ENCODE measurements at regions of chr1 and their contacts with region 1.

Region 1: GRCh38 chr1:153922972-153923925 is at the start of gene GATAD2B:
- DNase-seq: peak; percentile 100
- ATAC-seq: peak; percentile 96
- H3K4me3 ChIP-seq: peak within 1 kb of the TSS; percentile 98
- H3K27ac ChIP-seq: peak within 1 kb of the TSS; percentile 99
- H3K4me1 ChIP-seq: peaks cover 11% of the 10 kb centered on the region
- H3K27me3 ChIP-seq: no peaks in the 10 kb centered on the region
- CTCF ChIP-seq: no peak
- EP300 ChIP-seq: peak in 1 of 2 experiments; percentile 31; a peak in 1 of 4 replicates
- POLR2A ChIP-seq: peak; percentile 79
- RAD21 ChIP-seq: peak; percentile 20; the same call in 1 of the 2 replicates
- polyA plus RNA-seq, gene GATAD2B: 2.4 to 8.7 TPM

Region 2: DNA sequence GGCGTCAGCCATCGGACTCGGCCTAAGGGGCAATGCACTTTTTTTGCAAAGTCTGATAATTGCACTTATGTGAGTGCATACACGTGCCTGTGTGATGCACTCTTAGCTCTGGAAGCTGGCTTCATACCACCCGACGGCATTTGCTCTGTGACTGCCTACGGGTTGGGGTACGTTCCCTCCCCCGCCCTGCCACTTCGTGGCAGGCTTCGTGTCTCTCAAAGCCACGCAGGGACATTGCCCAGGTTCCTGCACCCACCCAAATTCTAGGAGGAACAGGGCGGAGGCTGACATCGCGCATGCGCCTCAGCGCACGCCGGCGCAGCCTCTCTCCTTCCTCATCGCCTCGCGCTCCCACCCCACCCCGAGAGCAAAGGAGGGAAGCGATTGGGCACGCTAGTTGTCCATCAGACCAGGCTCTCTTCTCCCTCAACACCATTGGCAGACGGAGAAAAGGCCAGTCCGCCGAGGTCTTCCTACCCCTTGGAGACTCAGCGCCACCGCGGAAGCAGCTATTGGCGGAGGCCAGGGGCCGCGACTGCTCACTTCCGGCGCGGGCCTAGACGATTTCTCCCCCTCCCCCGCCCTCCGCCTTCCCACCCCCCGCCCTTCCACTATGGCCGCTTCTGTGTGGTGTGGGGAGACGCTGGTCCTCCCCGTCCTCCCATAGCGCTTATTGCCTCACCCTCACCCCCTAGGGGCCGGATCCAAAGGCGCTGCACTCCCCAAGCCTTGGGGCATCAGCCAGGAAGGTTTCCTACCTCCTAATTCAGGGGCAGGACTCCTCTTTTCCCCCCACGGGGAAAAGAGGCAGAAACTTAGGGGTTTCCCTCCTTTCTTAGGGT is 195.6 kb before region 1 on chr1 and contains the start of gene INTS3:
- CTCF ChIA-PET with region 1: no interaction called
- POLR2A ChIA-PET with region 1: no interaction called
- RAD21 ChIA-PET with region 1: interaction called, 4 read pairs
- SMC1A ChIA-PET with region 1: no interaction called
- in situ Hi-C with region 1: no loop called
- intact Hi-C with region 1: loop called (anchors 2 kb)
- DNase-seq: peak; percentile 100
- ATAC-seq: peak; percentile 92
- H3K4me3 ChIP-seq: peak within 1 kb of the TSS; percentile 100
- H3K27ac ChIP-seq: peak within 1 kb of the TSS; percentile 100
- H3K4me1 ChIP-seq: peaks cover 12% of the 10 kb centered on the region
- H3K27me3 ChIP-seq: no peaks in the 10 kb centered on the region
- CTCF ChIP-seq: peak in 2 of 3 experiments; percentile 10 to 19; a peak in 2 of 6 replicates
- EP300 ChIP-seq: no peak
- POLR2A ChIP-seq: peak; percentile 92
- RAD21 ChIP-seq: no peak
- polyA plus RNA-seq, gene INTS3: 12.6 to 14.0 TPM

Region 3: DNA sequence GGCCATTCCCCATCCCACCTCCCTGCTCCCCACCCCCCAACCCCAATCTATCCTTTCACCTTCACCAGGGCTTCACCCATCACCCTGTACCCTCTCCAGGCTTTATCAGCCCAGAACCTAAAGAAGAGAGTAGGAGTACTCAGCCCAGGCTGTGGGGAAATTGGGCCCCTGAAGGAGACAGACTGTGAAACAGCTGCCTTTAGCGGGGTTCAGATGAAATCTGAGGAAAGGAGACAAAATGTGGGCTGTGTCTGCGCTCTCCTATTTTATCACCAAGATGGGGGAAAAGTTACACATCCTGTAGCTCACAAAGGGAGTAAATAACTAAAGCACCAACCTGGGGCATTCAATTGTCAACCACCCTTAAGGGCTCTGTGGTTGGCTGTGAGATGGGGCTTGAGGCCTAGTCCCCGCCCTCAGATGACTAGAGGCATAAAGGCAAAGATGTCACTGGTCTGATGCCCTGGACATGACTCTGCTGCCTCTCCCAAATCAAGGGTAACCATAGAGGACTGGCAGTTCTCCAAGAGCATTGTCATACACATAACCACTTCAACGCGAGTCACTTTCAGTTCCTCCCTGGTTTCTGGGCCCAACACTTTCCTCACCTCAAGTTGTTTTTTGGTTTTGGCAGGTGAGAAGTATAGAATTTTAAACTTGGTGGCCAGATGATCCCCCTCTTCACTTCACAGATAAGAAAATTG is 118.1 kb before region 1 on chr1:
- CTCF ChIA-PET with region 1: interaction called, 9 read pairs
- POLR2A ChIA-PET with region 1: interaction called, 3 read pairs
- RAD21 ChIA-PET with region 1: interaction called, 46 read pairs
- SMC1A ChIA-PET with region 1: interaction called, 6 read pairs
- in situ Hi-C with region 1: no loop called
- intact Hi-C with region 1: loop called (anchors 5 kb)
- DNase-seq: peak; percentile 98
- ATAC-seq: peak; percentile 99
- H3K4me3 ChIP-seq: 0 out of 2 replicates have a peak overlapping the region, but pooled peaks have one; percentile 38
- H3K27ac ChIP-seq: peak overlapping the region; percentile 89
- H3K4me1 ChIP-seq: peaks cover 39% of the 10 kb centered on the region
- H3K27me3 ChIP-seq: no peaks in the 10 kb centered on the region
- CTCF ChIP-seq: no peak
- EP300 ChIP-seq: peak; percentile 90 to 98
- POLR2A ChIP-seq: peak; percentile 38; the same call in 1 of the 2 replicates
- RAD21 ChIP-seq: no peak

Region 4: GRCh38 chr1:153827168-153827964 is 95.9 kb before region 1 on chr1:
- CTCF ChIA-PET with region 1: interaction called, 138 read pairs
- POLR2A ChIA-PET with region 1: interaction called, 5 read pairs
- RAD21 ChIA-PET with region 1: no interaction called
- SMC1A ChIA-PET with region 1: interaction called, 29 read pairs
- in situ Hi-C with region 1: no loop called
- intact Hi-C with region 1: no loop called
- DNase-seq: no peak
- ATAC-seq: peak; percentile 64
- H3K4me3 ChIP-seq: no peak overlapping the region
- H3K27ac ChIP-seq: peak overlapping the region; percentile 52
- H3K4me1 ChIP-seq: peaks cover 10% of the 10 kb centered on the region
- H3K27me3 ChIP-seq: no peaks in the 10 kb centered on the region
- CTCF ChIP-seq: 0 out of 6 replicates have a peak, but pooled peaks of 1 of the 3 experiments have one; percentile 11
- EP300 ChIP-seq: no peak
- POLR2A ChIP-seq: no peak
- RAD21 ChIP-seq: no peak

Region 5: GRCh38 chr1:153849487-153850185 is 73.6 kb before region 1 on chr1:
- CTCF ChIA-PET with region 1: interaction called, 5 read pairs
- POLR2A ChIA-PET with region 1: interaction called, 8 read pairs
- RAD21 ChIA-PET with region 1: interaction called, 9 read pairs
- SMC1A ChIA-PET with region 1: interaction called, 11 read pairs
- in situ Hi-C with region 1: no loop called
- intact Hi-C with region 1: loop called (anchors 5 kb)
- DNase-seq: peak; percentile 78
- ATAC-seq: peak; percentile 92
- H3K4me3 ChIP-seq: 0 out of 2 replicates have a peak overlapping the region, but pooled peaks have one; percentile 4
- H3K27ac ChIP-seq: peak overlapping the region; percentile 70
- H3K4me1 ChIP-seq: peaks cover 46% of the 10 kb centered on the region
- H3K27me3 ChIP-seq: no peaks in the 10 kb centered on the region
- CTCF ChIP-seq: no peak
- EP300 ChIP-seq: peak in 1 of 2 experiments; percentile 20; a peak in 1 of 4 replicates
- POLR2A ChIP-seq: no peak
- RAD21 ChIP-seq: no peak

Region 6: DNA sequence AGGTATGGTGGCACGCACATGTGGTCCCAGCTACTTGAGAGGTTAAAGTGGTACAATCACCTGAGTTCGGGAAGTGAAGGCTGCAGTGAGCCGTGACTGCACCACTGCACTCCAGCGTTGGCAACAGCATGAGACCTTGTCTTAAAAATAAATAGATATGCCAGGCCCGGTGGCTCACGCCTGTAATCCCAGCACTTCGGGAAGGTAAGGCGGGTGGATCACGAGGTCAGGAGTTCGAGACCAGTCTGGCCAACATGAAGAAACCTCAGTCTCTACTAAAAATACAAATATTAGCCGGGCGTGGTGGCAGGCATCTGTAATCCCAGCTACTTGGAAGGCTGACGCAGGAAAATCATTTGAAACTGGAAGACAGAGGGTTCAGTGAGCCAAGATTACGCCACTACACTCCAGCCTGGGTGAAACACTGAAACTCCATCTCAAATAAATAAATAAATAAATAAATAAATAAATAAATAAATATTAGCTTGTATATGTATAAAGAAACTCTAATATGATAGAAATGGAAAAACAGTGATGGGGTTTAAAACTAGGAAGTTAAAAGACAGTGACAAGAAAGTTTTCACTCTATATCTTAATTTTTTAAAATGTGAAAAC is 19.3 kb before region 1 on chr1:
- CTCF ChIA-PET with region 1: interaction called, 5 read pairs
- POLR2A ChIA-PET with region 1: interaction called, 3 read pairs
- RAD21 ChIA-PET with region 1: interaction called, 3 read pairs
- SMC1A ChIA-PET with region 1: interaction called, 27 read pairs
- in situ Hi-C with region 1: no loop called
- intact Hi-C with region 1: no loop called
- DNase-seq: no peak
- ATAC-seq: no peak
- H3K4me3 ChIP-seq: no peak overlapping the region
- H3K27ac ChIP-seq: no peak overlapping the region
- H3K4me1 ChIP-seq: peaks cover 5% of the 10 kb centered on the region; the same call in 1 of the 2 replicates
- H3K27me3 ChIP-seq: no peaks in the 10 kb centered on the region
- CTCF ChIP-seq: no peak
- EP300 ChIP-seq: no peak
- POLR2A ChIP-seq: no peak
- RAD21 ChIP-seq: no peak

Region 7: GRCh38 chr1:153967082-153968000 is 44.1 kb after region 1 on chr1 and contains the start of gene CREB3L4:
- CTCF ChIA-PET with region 1: interaction called, 20 read pairs
- POLR2A ChIA-PET with region 1: interaction called, 20 read pairs
- RAD21 ChIA-PET with region 1: interaction called, 15 read pairs
- SMC1A ChIA-PET with region 1: interaction called, 15 read pairs
- in situ Hi-C with region 1: no loop called
- intact Hi-C with region 1: no loop called
- DNase-seq: peak; percentile 95
- ATAC-seq: peak; percentile 88
- H3K4me3 ChIP-seq: peak within 1 kb of the TSS; percentile 92
- H3K27ac ChIP-seq: peak within 1 kb of the TSS; percentile 91
- H3K4me1 ChIP-seq: peaks cover 15% of the 10 kb centered on the region
- H3K27me3 ChIP-seq: no peaks in the 10 kb centered on the region
- CTCF ChIP-seq: peak; percentile 25 to 63 (median 55); a peak in 5 of 6 replicates
- EP300 ChIP-seq: no peak; a peak in 1 of 4 replicates
- POLR2A ChIP-seq: peak; percentile 90
- RAD21 ChIP-seq: peak; percentile 26; the same call in 1 of the 2 replicates
- polyA plus RNA-seq, gene CREB3L4: 9.7 to 12.9 TPM

Region 8: GRCh38 chr1:154627257-154628120 is 704.2 kb after region 1 on chr1:
- CTCF ChIA-PET with region 1: no interaction called
- POLR2A ChIA-PET with region 1: no interaction called
- RAD21 ChIA-PET with region 1: no interaction called
- SMC1A ChIA-PET with region 1: no interaction called
- in situ Hi-C with region 1: no loop called
- intact Hi-C with region 1: no loop called
- DNase-seq: no peak
- ATAC-seq: peak; percentile 74
- H3K4me3 ChIP-seq: peak overlapping the region; percentile 82
- H3K27ac ChIP-seq: peak overlapping the region; percentile 94
- H3K4me1 ChIP-seq: peaks cover 3% of the 10 kb centered on the region; the same call in 1 of the 2 replicates
- H3K27me3 ChIP-seq: no peaks in the 10 kb centered on the region
- CTCF ChIP-seq: no peak
- EP300 ChIP-seq: peak in 1 of 2 experiments; percentile 15; a peak in 1 of 4 replicates
- POLR2A ChIP-seq: peak; percentile 55; the same call in 1 of the 2 replicates
- RAD21 ChIP-seq: no peak